Calu3 (cell line): ENCODE measurements at regions of chr16 and their contacts with region 1.

Region 1: DNA sequence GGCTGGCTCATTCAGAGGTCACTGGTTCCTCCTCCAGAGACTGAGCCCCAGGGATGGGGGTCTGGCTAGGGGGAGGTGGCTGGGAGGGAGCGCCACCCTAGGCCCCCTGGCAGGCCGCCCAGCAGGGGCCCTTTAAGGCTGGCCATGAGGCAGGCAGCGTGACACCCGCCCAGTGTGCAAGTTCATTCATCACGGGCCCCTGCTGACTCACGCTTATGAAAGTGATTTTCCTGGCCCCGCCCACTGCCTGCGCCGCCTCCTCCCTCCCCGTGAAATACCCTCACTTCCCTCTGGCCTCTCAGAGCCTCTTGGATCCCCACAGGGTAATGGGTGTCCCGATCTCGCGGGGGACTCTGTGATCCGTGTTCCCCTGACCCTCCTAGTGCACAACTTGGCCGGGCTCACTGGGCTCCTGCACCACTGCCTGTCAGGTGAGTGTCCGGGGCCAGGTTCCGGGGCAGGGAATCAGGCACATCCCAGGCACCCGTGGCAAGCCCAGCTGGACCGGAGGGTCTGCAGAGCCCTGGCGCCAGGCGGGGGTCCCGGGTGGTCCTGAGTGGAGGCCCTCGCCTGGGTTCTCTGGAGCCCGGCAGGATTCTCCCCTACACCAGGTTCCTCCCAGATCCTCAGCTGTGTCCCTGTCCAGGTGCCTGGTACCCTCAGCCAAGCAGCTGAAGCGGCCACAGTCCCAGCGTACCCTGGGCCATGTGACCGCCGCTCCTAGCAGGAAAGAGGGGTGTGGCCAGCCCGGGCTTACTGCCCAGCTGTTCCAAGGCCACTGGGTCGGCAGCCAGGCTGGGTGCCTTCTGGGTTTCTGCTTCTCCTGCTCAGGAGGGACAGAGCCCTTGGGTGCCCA is at the start of gene OSGIN1:
- DNase-seq: peak; percentile 96
- H3K4me3 Mint-ChIP-seq: peak within 1 kb of the TSS; percentile 84
- H3K27ac Mint-ChIP-seq: peak within 1 kb of the TSS; percentile 87
- H3K4me1 Mint-ChIP-seq: peaks cover 9% of the 10 kb centered on the region
- H3K27me3 Mint-ChIP-seq: no peaks in the 10 kb centered on the region
- CTCF ChIP-seq: no peak
- total RNA-seq, gene OSGIN1: 13.9 and 15.6 TPM in 2 replicates

Region 2: GRCh38 chr16:83494459-83494858 is 458.7 kb before region 1 on chr16:
- CTCF ChIA-PET with region 1: no interaction called
- intact Hi-C with region 1: no loop called
- DNase-seq: no peak
- H3K4me3 Mint-ChIP-seq: no peak overlapping the region
- H3K27ac Mint-ChIP-seq: no peak overlapping the region
- H3K4me1 Mint-ChIP-seq: no peaks in the 10 kb centered on the region
- H3K27me3 Mint-ChIP-seq: no peaks in the 10 kb centered on the region
- CTCF ChIP-seq: no peak

Region 3: GRCh38 chr16:83826146-83826913 is 126.8 kb before region 1 on chr16:
- CTCF ChIA-PET with region 1: no interaction called
- intact Hi-C with region 1: loop called (anchors 10 kb)
- DNase-seq: peak; percentile 92
- H3K4me3 Mint-ChIP-seq: peak overlapping the region; percentile 42
- H3K27ac Mint-ChIP-seq: no peak overlapping the region
- H3K4me1 Mint-ChIP-seq: peaks cover 16% of the 10 kb centered on the region
- H3K27me3 Mint-ChIP-seq: peaks cover 30% of the 10 kb centered on the region
- CTCF ChIP-seq: peak; percentile 95

Region 4: DNA sequence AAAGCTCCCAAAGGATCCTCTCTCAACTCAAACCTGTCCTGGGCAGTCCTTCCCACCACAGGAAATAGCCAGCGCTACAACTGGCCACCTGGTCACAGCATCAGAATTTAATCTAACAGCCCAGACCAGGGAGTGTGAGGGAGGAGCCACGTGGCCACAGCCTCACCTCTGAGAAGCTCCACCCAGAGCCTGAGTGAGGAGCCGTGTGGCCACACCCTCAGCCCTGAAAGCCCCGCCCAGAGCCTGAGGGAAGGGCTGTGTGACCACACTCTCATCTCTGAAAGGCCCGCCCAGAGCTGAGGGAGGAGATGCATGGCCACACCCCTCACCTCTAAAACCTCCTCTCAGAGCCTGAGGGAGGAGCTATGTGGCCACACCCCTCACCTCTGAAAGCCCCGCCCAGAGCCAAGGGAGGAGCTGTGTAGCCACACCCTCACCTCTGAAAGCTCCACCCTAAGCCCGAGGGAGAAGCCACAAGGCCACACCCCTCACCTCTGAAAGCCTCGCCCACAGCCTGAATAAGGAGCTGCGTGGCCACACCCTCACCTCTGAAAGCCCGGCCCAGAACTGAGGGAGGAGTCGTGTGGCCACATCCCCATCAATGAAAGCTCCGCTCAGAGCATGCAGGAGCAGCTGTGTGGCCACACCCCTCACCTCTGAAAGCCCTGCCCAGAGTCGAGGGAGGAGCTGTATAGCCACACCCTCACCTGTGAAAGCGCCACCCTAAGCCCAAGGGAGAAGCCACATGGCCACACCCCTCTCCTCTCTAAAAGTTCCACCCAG is 60.8 kb after region 1 on chr16:
- CTCF ChIA-PET with region 1: interaction called, 13 read pairs
- intact Hi-C with region 1: no loop called
- DNase-seq: peak; percentile 98
- H3K4me3 Mint-ChIP-seq: peak overlapping the region; percentile 4
- H3K27ac Mint-ChIP-seq: peak overlapping the region; percentile 16
- H3K4me1 Mint-ChIP-seq: peaks cover 8% of the 10 kb centered on the region
- H3K27me3 Mint-ChIP-seq: peaks cover 38% of the 10 kb centered on the region
- CTCF ChIP-seq: no peak

Region 5: DNA sequence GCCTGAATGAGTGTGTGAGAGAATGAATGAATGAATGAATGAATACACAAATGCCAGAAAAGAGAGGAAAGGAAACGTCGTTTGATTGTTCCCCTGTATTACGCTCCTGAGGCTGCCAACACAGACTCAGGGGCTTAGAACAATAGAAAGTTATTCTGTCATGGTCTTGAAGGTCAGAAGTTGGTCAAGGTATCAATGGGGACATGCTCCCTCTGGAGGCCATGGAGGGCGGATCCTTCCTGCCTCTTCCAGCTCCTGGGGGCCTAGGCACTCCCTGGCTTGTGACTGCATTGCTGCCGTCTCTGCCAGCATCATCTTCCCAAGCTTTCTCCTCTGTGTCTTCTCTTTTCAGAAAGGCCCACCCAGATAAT is 90.9 kb after region 1 on chr16:
- CTCF ChIA-PET with region 1: interaction called, 12 read pairs
- intact Hi-C with region 1: loop called (anchors 2 kb)
- DNase-seq: peak; percentile 42
- H3K4me3 Mint-ChIP-seq: no peak overlapping the region
- H3K27ac Mint-ChIP-seq: no peak overlapping the region
- H3K4me1 Mint-ChIP-seq: peaks cover 19% of the 10 kb centered on the region
- H3K27me3 Mint-ChIP-seq: peaks cover 61% of the 10 kb centered on the region
- CTCF ChIP-seq: peak; percentile 57

Region 6: GRCh38 chr16:84062734-84063640 is 109.8 kb after region 1 on chr16:
- CTCF ChIA-PET with region 1: interaction called, 5 read pairs
- intact Hi-C with region 1: loop called (anchors 1 kb)
- DNase-seq: peak; percentile 86
- H3K4me3 Mint-ChIP-seq: no peak overlapping the region
- H3K27ac Mint-ChIP-seq: no peak overlapping the region
- H3K4me1 Mint-ChIP-seq: no peaks in the 10 kb centered on the region
- H3K27me3 Mint-ChIP-seq: no peaks in the 10 kb centered on the region
- CTCF ChIP-seq: peak; percentile 85

Region 7: GRCh38 chr16:84175350-84176081 is 222.3 kb after region 1 on chr16:
- CTCF ChIA-PET with region 1: interaction called, 3 read pairs
- intact Hi-C with region 1: loop called (anchors 10 kb)
- DNase-seq: peak; percentile 88
- H3K4me3 Mint-ChIP-seq: no peak overlapping the region
- H3K27ac Mint-ChIP-seq: peak overlapping the region; percentile 45
- H3K4me1 Mint-ChIP-seq: peaks cover 9% of the 10 kb centered on the region
- H3K27me3 Mint-ChIP-seq: no peaks in the 10 kb centered on the region
- CTCF ChIP-seq: peak; percentile 93

Region 8: GRCh38 chr16:84284154-84284722 is 331.1 kb after region 1 on chr16:
- CTCF ChIA-PET with region 1: no interaction called
- intact Hi-C with region 1: no loop called
- DNase-seq: peak; percentile 25
- H3K4me3 Mint-ChIP-seq: no peak overlapping the region
- H3K27ac Mint-ChIP-seq: no peak overlapping the region
- H3K4me1 Mint-ChIP-seq: peaks cover 24% of the 10 kb centered on the region
- H3K27me3 Mint-ChIP-seq: peaks cover 35% of the 10 kb centered on the region
- CTCF ChIP-seq: no peak